ENCODE measurements at regions of chr7 and their contacts with region 1.

Region 1: DNA sequence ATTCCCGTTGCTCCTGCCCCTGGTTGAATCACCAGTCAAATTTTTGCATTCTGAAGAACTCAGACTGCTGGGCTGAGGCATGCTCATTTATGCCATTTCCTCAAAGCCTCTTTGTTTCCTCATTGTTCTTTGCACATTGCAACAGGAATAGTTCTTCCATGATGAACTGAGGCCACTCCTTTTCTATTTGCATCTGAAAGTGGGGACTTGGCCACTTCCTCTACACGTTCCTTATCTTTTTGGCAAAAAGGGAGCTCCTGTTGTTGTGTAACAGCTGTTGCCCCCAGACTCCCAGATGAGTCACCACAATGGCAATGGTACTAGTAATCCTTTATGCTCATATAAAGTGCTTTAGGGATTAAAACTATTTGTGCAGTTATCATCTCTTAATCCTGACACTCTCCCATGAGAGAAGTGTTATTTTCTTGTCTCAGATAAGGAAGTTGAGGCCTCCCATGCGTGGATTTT is 20.1 kb upstream of the ITPRID1 start:
- DNase-seq: peak; percentile 66 to 71
- H3K4me3 ChIP-seq: no peak overlapping the region
- H3K4me3 Mint-ChIP-seq: no peak overlapping the region
- H3K27ac Mint-ChIP-seq: peak overlapping the region; percentile 68
- H3K4me1 ChIP-seq: peaks cover 35% of the 10 kb centered on the region
- H3K4me1 Mint-ChIP-seq: peaks cover 20% of the 10 kb centered on the region
- H3K27me3 ChIP-seq: no peaks in the 10 kb centered on the region
- H3K27me3 Mint-ChIP-seq: no peaks in the 10 kb centered on the region
- CTCF ChIP-seq: no peak

Region 2: GRCh38 chr7:31236868-31237267 is 256.9 kb before region 1 on chr7:
- CTCF ChIA-PET with region 1: no interaction called
- POLR2A ChIA-PET with region 1: no interaction called
- intact Hi-C with region 1: no loop called
- DNase-seq: no peak
- H3K4me3 ChIP-seq: no peak overlapping the region
- H3K4me3 Mint-ChIP-seq: no peak overlapping the region
- H3K27ac Mint-ChIP-seq: no peak overlapping the region
- H3K4me1 ChIP-seq: no peaks in the 10 kb centered on the region
- H3K4me1 Mint-ChIP-seq: no peaks in the 10 kb centered on the region
- H3K27me3 ChIP-seq: no peaks in the 10 kb centered on the region
- H3K27me3 Mint-ChIP-seq: peaks cover 23% of the 10 kb centered on the region
- CTCF ChIP-seq: no peak

Region 3: DNA sequence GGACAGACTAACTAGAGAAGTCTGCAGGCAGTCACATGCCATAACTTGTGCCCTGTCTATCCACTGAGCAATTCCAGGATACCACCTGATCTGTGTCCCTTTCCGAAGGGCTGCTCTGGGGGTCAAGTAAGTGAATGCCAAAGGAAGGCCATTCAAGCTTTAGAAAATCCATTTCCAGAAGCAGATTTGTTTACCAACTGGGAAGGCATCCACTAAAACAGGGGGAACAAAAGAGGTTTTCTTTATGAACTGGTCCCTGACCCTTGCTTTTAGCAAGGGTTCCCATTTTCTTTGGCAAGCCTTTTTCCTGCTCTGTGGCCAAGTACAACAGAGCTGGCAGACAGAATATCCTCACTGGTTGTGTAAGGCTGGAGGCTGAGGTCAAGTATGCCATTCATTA is 56.7 kb after region 1 on chr7:
- CTCF ChIA-PET with region 1: no interaction called
- POLR2A ChIA-PET with region 1: no interaction called
- intact Hi-C with region 1: loop called (anchors 1 kb)
- DNase-seq: no peak
- H3K4me3 ChIP-seq: no peak overlapping the region
- H3K4me3 Mint-ChIP-seq: no peak overlapping the region
- H3K27ac Mint-ChIP-seq: no peak overlapping the region
- H3K4me1 ChIP-seq: peaks cover 46% of the 10 kb centered on the region
- H3K4me1 Mint-ChIP-seq: peaks cover 11% of the 10 kb centered on the region
- H3K27me3 ChIP-seq: no peaks in the 10 kb centered on the region
- H3K27me3 Mint-ChIP-seq: no peaks in the 10 kb centered on the region
- CTCF ChIP-seq: no peak

Region 4: DNA sequence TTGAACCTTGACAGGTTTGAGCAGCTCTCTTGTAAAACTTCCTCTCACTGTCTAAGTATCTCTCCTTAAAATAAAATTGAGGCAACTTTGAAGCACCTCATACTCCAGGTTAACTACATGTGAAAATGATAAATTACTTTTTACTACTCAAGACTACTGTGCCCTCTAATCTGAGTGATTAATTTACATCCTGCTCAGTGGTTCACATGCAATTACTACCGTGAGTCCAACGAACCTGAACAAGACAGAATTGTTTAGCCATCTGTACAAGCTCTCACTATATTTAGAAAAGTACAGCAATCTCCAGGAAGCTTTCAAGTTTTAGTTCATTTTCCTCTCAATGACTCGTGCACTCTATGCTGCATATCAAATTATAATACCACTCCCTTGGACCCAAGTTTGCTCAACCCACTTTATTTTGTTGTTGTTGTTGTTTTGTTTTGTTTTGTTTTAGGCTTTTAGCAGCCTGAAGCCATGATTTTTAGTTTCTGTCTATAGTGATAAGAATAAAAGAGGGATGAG is 555.3 kb after region 1 on chr7:
- CTCF ChIA-PET with region 1: no interaction called
- POLR2A ChIA-PET with region 1: no interaction called
- intact Hi-C with region 1: no loop called
- DNase-seq: no peak
- H3K4me3 ChIP-seq: no peak overlapping the region
- H3K4me3 Mint-ChIP-seq: no peak overlapping the region
- H3K27ac Mint-ChIP-seq: no peak overlapping the region
- H3K4me1 ChIP-seq: no peaks in the 10 kb centered on the region
- H3K4me1 Mint-ChIP-seq: no peaks in the 10 kb centered on the region
- H3K27me3 ChIP-seq: no peaks in the 10 kb centered on the region
- H3K27me3 Mint-ChIP-seq: no peaks in the 10 kb centered on the region
- CTCF ChIP-seq: no peak

Measured in Caco-2 (cell line).